Caco-2 (cell line): ENCODE measurements at regions of chr1 and their contacts with region 1.

Region 1: GRCh38 chr1:68470388-68470970 is 20.7 kb upstream of the RPE65 start:
- DNase-seq: no peak
- H3K4me3 ChIP-seq: no peak overlapping the region
- H3K4me3 Mint-ChIP-seq: no peak overlapping the region
- H3K27ac Mint-ChIP-seq: no peak overlapping the region
- H3K4me1 ChIP-seq: no peaks in the 10 kb centered on the region
- H3K4me1 Mint-ChIP-seq: no peaks in the 10 kb centered on the region
- H3K27me3 ChIP-seq: no peaks in the 10 kb centered on the region
- H3K27me3 Mint-ChIP-seq: no peaks in the 10 kb centered on the region
- CTCF ChIP-seq: peak; percentile 14 to 50

Region 2: DNA sequence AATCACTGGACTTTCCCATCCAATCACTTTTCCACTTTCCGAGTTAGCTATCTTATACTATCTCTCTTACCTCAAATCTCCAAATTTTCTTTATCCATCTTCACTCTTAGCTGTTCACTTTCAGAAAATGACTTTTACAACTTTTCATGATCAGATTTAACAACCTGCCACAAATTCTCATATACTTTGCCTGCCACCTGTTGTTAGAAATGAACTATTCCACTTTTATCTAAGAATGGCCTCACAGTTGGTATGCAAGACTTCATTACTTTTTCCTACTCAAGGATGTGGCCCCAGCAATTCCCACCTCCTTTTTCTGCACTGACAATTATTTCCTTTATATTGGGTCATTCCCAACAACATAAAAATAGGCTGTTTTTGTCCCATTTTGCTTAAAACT is 120.0 kb after region 1 on chr1:
- CTCF ChIA-PET with region 1: no interaction called
- POLR2A ChIA-PET with region 1: no interaction called
- intact Hi-C with region 1: loop called (anchors 1 kb)
- DNase-seq: no peak
- H3K4me3 ChIP-seq: no peak overlapping the region
- H3K4me3 Mint-ChIP-seq: no peak overlapping the region
- H3K27ac Mint-ChIP-seq: no peak overlapping the region
- H3K4me1 ChIP-seq: no peaks in the 10 kb centered on the region
- H3K4me1 Mint-ChIP-seq: no peaks in the 10 kb centered on the region
- H3K27me3 ChIP-seq: no peaks in the 10 kb centered on the region
- H3K27me3 Mint-ChIP-seq: peaks cover 2% of the 10 kb centered on the region
- CTCF ChIP-seq: no peak